MCF 10A (cell line): ENCODE measurements at regions of chr6 and their contacts with region 1.

Region 1: DNA sequence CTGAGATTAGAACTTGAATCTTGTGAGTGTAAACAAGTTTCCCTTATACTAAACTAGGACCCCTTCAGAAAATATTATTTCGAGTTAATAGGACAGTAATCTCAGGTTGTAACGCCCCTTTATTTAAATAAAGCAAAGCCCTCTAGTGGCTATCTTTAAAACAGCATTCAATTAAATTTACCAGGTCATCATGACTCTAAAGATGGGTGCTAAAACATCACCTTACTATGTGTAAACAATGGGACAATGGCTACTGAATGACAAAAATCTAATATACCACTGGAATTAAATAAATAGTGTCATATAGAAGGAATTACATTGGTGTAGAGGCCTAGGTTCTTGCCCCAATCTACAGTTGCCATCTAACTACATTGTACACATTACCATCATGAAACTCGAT is 255.4 kb upstream of the IRAK1BP1 start:
- DNase-seq: peak; percentile 31
- H3K4me3 Mint-ChIP-seq: no peak overlapping the region
- H3K27ac Mint-ChIP-seq: no peak overlapping the region
- H3K4me1 Mint-ChIP-seq: peaks cover 11% of the 10 kb centered on the region
- H3K27me3 Mint-ChIP-seq: no peaks in the 10 kb centered on the region
- CTCF ChIP-seq: peak; percentile 56

Region 2: GRCh38 chr6:78436335-78436734 is 175.6 kb before region 1 on chr6:
- CTCF ChIA-PET with region 1: no interaction called
- POLR2A ChIA-PET with region 1: no interaction called
- intact Hi-C with region 1: loop called (anchors 5 kb)
- DNase-seq: peak; percentile 38
- H3K4me3 Mint-ChIP-seq: no peak overlapping the region
- H3K27ac Mint-ChIP-seq: no peak overlapping the region
- H3K4me1 Mint-ChIP-seq: no peaks in the 10 kb centered on the region
- H3K27me3 Mint-ChIP-seq: no peaks in the 10 kb centered on the region
- CTCF ChIP-seq: peak; percentile 45

Region 3: GRCh38 chr6:78598966-78599365 is 13.0 kb before region 1 on chr6:
- CTCF ChIA-PET with region 1: interaction called, 15 read pairs
- POLR2A ChIA-PET with region 1: interaction called, 7 read pairs
- intact Hi-C with region 1: no loop called
- DNase-seq: peak; percentile 98
- H3K4me3 Mint-ChIP-seq: no peak overlapping the region
- H3K27ac Mint-ChIP-seq: peak overlapping the region; percentile 86
- H3K4me1 Mint-ChIP-seq: peaks cover 28% of the 10 kb centered on the region
- H3K27me3 Mint-ChIP-seq: no peaks in the 10 kb centered on the region
- CTCF ChIP-seq: no peak